ENCODE measurements at regions of chr3 and their contacts with region 1.

Region 1: DNA sequence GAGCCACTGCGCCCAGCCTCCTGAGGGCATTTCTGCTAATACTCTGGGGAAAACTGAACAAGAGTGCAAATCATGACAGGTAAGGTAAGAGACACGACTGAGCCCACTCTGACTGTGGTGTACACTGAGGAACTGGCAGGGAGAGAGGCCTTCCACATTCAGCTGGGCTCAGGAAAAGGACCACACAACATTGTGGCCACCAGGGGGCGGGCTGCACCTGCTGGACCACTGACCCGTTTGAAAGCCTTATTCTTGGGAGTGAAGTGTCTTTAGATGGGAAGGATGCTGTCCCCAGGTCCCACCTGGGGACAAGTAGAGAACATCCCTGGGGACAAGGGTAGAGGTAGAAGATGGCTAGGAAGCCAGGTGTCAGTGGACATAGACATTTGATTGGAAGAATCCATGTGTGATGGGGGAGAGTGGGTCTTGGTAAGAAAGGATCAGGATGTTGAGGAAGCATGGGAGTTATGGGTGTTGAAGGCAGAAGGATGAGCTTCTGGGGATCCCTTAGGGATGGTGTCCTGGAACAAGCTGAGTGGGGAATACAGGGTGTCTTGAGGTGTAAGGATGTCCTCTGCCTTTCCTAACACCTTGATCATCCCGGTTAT is 6.2 kb upstream of the CTDSPL start:
- DNase-seq: peak; percentile 64 to 96 (median 85)
- ATAC-seq: peak; percentile 62 to 81 (median 80)
- H3K4me3 ChIP-seq: no peak overlapping the region
- H3K27ac ChIP-seq: no peak overlapping the region
- H3K4me1 ChIP-seq: no peaks in the 10 kb centered on the region
- H3K27me3 ChIP-seq: no peaks in the 10 kb centered on the region
- CTCF ChIP-seq: peak; percentile 89 to 97 (median 92)

Region 2: GRCh38 chr3:37967260-37967881 is 111.9 kb after region 1 on chr3:
- intact Hi-C with region 1: loop called (anchors 5 to 10 kb)
- DNase-seq: peak in 5 of 6 donors; percentile 39 to 75 (median 59)
- ATAC-seq: peak; percentile 51 to 78 (median 76)
- H3K4me3 ChIP-seq: no peak overlapping the region
- H3K27ac ChIP-seq: no peak overlapping the region
- H3K4me1 ChIP-seq: peaks cover 3 to 30% (median 29%) of the 10 kb centered on the region in 3 donors
- H3K27me3 ChIP-seq: no peaks in the 10 kb centered on the region
- CTCF ChIP-seq: peak; percentile 41 to 76 (median 60)

Region 3: GRCh38 chr3:38004415-38005076 is 149.1 kb after region 1 on chr3:
- intact Hi-C with region 1: no loop called
- DNase-seq: peak; percentile 64 to 84 (median 79)
- ATAC-seq: peak; percentile 71 to 86 (median 82)
- H3K4me3 ChIP-seq: no peak overlapping the region
- H3K27ac ChIP-seq: peak overlapping the region; percentile 55 to 84 (median 75)
- H3K4me1 ChIP-seq: peaks cover 10 to 22% (median 11%) of the 10 kb centered on the region in 3 donors
- H3K27me3 ChIP-seq: no peaks in the 10 kb centered on the region
- CTCF ChIP-seq: peak; percentile 23 to 51 (median 44)

Region 4: DNA sequence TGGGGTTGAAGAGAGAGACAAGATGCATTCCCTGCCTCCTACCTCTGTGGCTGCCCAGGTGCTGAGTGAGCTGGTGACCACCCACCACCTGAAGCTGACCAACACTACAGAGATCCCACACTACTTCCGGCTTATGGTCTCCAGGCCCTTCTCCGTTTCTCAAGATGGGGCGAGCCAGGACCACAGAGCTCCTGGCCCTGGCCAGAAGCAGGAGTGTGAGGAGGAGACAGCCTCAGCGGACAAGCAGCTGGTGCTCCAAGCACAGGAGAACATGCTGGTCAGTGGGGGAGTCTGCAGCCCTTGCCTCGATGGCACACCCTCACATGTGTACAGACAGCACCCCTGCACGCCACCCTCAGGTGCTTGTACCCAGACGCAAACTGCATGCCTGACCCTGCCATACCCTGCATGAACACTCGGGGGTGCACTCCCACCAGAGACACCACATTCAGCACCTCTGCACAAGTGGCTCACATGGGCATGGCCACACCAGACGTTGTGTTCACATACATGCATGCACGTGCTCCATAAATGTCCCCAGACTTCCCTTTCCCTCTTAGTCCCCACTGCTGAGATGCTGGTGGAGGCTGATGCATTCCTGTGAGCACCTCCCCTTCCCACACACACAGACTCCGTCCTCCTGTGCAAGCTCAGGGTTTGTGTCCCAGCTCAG is 262.4 kb after region 1 on chr3:
- intact Hi-C with region 1: loop called in 1 of 3 experiments (anchors 10 kb)
- DNase-seq: peak in 5 of 6 donors; percentile 46 to 84 (median 74)
- ATAC-seq: peak; percentile 63 to 91 (median 84)
- H3K4me3 ChIP-seq: no peak overlapping the region
- H3K27ac ChIP-seq: no peak overlapping the region
- H3K4me1 ChIP-seq: no peaks in the 10 kb centered on the region
- H3K27me3 ChIP-seq: no peaks in the 10 kb centered on the region
- CTCF ChIP-seq: peak; percentile 50 to 59 (median 55)

Measured in pancreas (tissue), 10 donors.